ENCODE measurements at regions of chr16 and their contacts with region 1.

Region 1: GRCh38 chr16:5412728-5413127 is 315.1 kb upstream of the EEF2KMT start:
- DNase-seq: no peak
- H3K4me3 ChIP-seq: no peak overlapping the region
- H3K27ac ChIP-seq: no peak overlapping the region
- H3K4me1 ChIP-seq: no peaks in the 10 kb centered on the region
- H3K27me3 ChIP-seq: no peaks in the 10 kb centered on the region
- CTCF ChIP-seq: no peak

Region 2: GRCh38 chr16:5509793-5510192 is 97.1 kb after region 1 on chr16:
- CTCF ChIA-PET with region 1: no interaction called
- dilution Hi-C with region 1: loop called (anchors 5 kb)
- in situ Hi-C with region 1: no loop called
- intact Hi-C with region 1: no loop called
- DNase-seq: no peak
- H3K4me3 ChIP-seq: no peak overlapping the region
- H3K27ac ChIP-seq: no peak overlapping the region
- H3K4me1 ChIP-seq: no peaks in the 10 kb centered on the region
- H3K27me3 ChIP-seq: no peaks in the 10 kb centered on the region
- CTCF ChIP-seq: no peak